AG04450 (cell line): ENCODE measurements at regions of chr15 and their contacts with region 1.

Region 1: GRCh38 chr15:74809956-74810355 is 2.7 kb upstream of the LMAN1L start:
- DNase-seq: no peak
- H3K4me3 ChIP-seq: no peak overlapping the region
- H3K27ac ChIP-seq: no peak overlapping the region
- H3K27me3 ChIP-seq: no peaks in the 10 kb centered on the region
- CTCF ChIP-seq: no peak

Region 2: DNA sequence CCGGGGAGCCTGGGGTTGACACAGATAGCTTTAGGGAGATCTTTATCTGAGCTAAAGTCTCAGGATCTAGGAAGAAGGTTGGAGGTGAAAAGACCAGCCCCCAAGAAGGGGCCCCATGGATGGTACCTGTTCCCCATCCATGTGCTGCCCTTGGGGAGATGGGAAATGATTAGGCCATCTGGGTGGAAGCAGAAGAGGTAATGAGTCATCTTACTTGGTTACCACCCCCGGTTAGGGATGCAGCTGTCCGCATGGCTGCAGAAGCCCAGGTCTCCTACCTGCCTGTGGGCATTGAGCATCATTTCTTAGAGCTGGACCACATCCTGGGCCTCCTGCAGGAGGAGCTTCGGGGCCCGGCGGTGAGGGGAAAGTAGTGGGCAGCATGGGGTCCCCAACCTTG is 13.4 kb after region 1 on chr15:
- CTCF ChIA-PET with region 1: interaction called, 5 read pairs
- POLR2A ChIA-PET with region 1: interaction called, 10 read pairs
- DNase-seq: no peak
- H3K4me3 ChIP-seq: no peak overlapping the region
- H3K27ac ChIP-seq: no peak overlapping the region
- H3K27me3 ChIP-seq: peaks cover 37% of the 10 kb centered on the region
- CTCF ChIP-seq: no peak